H1 (cell line): ENCODE measurements at regions of chr9 and their contacts with region 1.

Region 1: GRCh38 chr9:37800631-37801286 is at the start of gene DCAF10:
- DNase-seq: peak; percentile 58 to 99
- H3K4me3 ChIP-seq: peak within 1 kb of the TSS; percentile 70 to 97 (median 83)
- H3K27ac ChIP-seq: peak within 1 kb of the TSS; percentile 58
- H3K4me1 ChIP-seq: peaks cover 2 to 11% (median 5%) of the 10 kb centered on the region in 4 experiments; a peak in 6 of 7 replicates
- H3K27me3 ChIP-seq: no peaks in the 10 kb centered on the region
- CTCF ChIP-seq: no peak
- EP300 ChIP-seq: peak in 1 of 2 experiments; percentile 86; a peak in 1 of 3 replicates
- POLR2A ChIP-seq: peak; percentile 65 to 82; a peak in 2 of 3 replicates
- RAD21 ChIP-seq: peak in 1 of 2 experiments; percentile 18; a peak in 1 of 4 replicates
- total RNA-seq, gene DCAF10: 11.1 and 15.0 TPM in 2 replicates

Region 2: GRCh38 chr9:37784616-37785483 is 15.9 kb before region 1 on chr9 and contains the start of gene EXOSC3:
- CTCF ChIA-PET with region 1: interaction called, 10 read pairs
- POLR2A ChIA-PET with region 1: interaction called, 20 read pairs
- DNase-seq: peak; percentile 69 to 91
- H3K4me3 ChIP-seq: peak within 1 kb of the TSS; percentile 90 to 95 (median 94)
- H3K27ac ChIP-seq: peak within 1 kb of the TSS; percentile 82
- H3K4me1 ChIP-seq: peaks cover 0 to 4% (median 0%) of the 10 kb centered on the region in 4 experiments; a peak in 3 of 7 replicates
- H3K27me3 ChIP-seq: peaks cover 0 to 3% (median 2%) of the 10 kb centered on the region in 4 experiments; a peak in 2 of 7 replicates
- CTCF ChIP-seq: peak in 1 of 3 experiments; percentile 0; a peak in 1 of 4 replicates
- EP300 ChIP-seq: no peak
- POLR2A ChIP-seq: peak; percentile 73 to 88
- RAD21 ChIP-seq: peak in 1 of 2 experiments; percentile 13; a peak in 1 of 4 replicates
- total RNA-seq, gene EXOSC3: 73.4 and 77.4 TPM in 2 replicates

Region 3: DNA sequence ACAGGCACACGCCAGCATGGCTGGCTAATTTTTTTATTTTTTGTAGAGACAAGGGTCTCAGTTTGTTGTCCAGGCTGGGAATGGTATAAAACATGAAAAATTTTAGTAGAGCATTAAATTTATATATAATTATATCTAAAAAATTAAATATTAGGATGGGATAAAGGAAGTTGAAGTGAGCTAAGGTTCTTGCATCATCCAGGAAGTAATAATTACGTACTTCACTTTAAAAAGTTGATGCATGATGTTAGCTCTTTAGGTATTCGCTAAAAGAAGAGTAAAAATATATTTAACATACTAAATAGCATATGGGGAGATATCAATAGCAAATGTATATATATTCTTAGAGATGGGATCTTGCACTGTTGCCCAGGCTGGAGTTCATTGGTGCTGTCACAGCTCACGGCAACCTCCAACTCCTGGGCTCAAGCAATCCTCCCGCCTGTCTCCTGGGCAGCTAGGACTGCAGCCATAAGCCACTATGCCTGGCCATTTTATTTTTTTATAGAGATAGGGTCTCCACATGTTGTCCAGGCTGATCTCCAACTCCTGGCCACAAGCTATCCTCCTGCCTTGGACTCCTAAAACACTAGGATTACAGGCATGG is 12.1 kb after region 1 on chr9:
- CTCF ChIA-PET with region 1: no interaction called
- POLR2A ChIA-PET with region 1: interaction called, 11 read pairs
- DNase-seq: no peak
- H3K4me3 ChIP-seq: no peak overlapping the region
- H3K27ac ChIP-seq: no peak overlapping the region
- H3K4me1 ChIP-seq: no peaks in the 10 kb centered on the region
- H3K27me3 ChIP-seq: no peaks in the 10 kb centered on the region
- CTCF ChIP-seq: no peak
- EP300 ChIP-seq: no peak
- POLR2A ChIP-seq: no peak
- RAD21 ChIP-seq: no peak